ENCODE measurements at regions of chr3 and their contacts with region 1.

Region 1: GRCh38 chr3:50260027-50260941 is 8.7 kb upstream of the SEMA3B start:
- DNase-seq: peak; percentile 91
- ATAC-seq: peak; percentile 67
- H3K4me3 ChIP-seq: peak overlapping the region; percentile 50 to 76 (median 62); a peak in 5 of 6 replicates
- H3K27ac ChIP-seq: peak overlapping the region; percentile 99
- H3K4me1 ChIP-seq: peaks cover 60% of the 10 kb centered on the region
- H3K27me3 ChIP-seq: no peaks in the 10 kb centered on the region
- CTCF ChIP-seq: peak; percentile 92
- EP300 ChIP-seq: peak; percentile 85 to 92; a peak in 3 of 4 replicates
- POLR2A ChIP-seq: peak in 1 of 2 experiments; percentile 54; a peak in 1 of 4 replicates
- RAD21 ChIP-seq: peak; percentile 100

Region 2: DNA sequence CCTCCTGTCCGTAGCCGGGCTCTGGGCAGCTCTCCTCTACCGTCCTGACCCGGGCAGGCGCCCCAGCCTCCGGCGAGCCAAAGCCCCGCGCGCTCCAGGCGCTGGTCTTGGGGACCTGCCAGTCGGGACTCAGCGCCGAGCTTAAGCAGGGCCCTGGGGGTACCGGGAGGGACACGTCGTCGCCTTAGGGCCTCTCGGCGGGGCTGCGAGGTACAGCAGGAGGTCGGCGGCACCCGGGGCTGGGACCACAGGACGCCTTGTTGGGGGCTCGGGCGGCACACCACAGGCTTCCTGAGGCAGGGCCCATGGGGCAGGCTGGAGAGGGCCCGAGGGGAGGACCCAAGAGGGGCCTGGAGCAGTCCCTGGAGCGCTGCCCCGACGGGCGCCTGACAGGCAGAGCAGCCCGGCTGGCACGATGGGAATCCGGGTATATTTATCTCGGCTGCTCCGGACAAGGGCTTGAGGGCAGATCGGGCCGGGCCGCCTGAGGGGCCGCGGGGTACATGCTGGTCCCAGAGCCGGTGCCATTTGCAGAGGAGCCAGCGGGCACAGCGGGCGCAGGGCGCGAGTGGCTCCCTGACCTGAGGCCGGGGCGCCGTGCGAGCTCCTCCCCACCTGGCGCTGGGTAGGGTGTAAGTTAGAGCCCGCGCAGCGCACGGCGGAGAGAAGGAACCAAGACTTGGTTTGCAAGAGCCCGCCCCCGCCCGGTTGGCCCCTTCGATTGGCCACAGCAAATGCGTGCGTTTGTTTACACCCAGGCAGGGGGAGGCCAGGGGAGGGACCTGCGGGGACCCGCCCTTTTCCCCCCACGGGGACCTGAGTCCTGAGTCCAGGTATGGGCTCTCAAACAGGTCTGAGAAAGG is 54.6 kb before region 1 on chr3:
- CTCF ChIA-PET with region 1: no interaction called
- POLR2A ChIA-PET with region 1: interaction called, 82 read pairs
- in situ Hi-C with region 1: no loop called
- intact Hi-C with region 1: no loop called
- DNase-seq: peak; percentile 73
- ATAC-seq: peak; percentile 20
- H3K4me3 ChIP-seq: peak overlapping the region; percentile 79 to 93 (median 85)
- H3K27ac ChIP-seq: peak overlapping the region; percentile 99
- H3K4me1 ChIP-seq: peaks cover 87% of the 10 kb centered on the region
- H3K27me3 ChIP-seq: no peaks in the 10 kb centered on the region
- CTCF ChIP-seq: 0 out of 2 replicates have a peak, but pooled peaks have one; percentile 3
- EP300 ChIP-seq: 0 out of 4 replicates have a peak, but pooled peaks of 1 of the 2 experiments have one; percentile 24
- POLR2A ChIP-seq: peak in 1 of 2 experiments; percentile 62; a peak in 2 of 4 replicates
- RAD21 ChIP-seq: 0 out of 2 replicates have a peak, but pooled peaks have one; percentile 43

Region 3: DNA sequence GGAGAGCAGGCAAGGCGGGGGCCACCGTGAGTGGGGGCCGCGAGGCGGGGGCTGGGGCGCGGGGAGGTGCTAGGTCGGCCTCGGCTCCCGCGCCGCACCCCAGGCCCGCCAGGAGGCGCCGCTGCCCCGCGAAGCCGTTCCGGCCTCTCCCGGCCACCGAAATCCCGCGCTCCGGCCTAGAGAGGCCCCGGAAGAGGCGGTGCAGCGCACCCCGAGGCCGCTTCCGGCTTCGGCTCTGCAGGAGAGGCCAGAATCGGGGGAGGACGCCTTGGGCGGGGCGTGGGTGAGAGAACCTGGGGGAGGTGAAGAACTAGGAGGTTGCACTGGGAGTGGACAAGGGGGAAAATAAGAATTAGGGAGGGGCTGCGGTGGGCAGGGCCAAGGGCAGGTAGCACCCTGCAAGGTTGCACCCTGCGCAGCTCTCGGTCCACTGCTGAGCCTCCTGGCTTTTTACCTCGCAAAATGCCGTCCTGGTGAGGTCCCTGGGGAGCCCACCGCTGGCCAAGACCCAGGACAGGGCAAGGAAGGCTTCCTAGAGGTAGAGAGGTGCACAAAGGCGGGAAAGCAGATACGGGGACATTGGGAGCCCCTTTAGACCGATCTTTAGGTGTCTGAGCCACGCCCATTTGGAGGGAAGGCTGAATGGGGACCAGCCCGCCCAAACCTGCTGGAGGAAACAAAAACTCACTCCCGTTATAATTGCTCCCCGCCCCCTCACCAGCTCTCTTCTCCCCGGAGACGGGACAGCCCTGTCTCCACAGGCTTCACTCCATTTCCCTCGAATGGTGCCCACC is 32.7 kb before region 1 on chr3:
- CTCF ChIA-PET with region 1: interaction called, 26 read pairs
- POLR2A ChIA-PET with region 1: interaction called, 11 read pairs
- in situ Hi-C with region 1: no loop called
- intact Hi-C with region 1: no loop called
- DNase-seq: peak; percentile 82
- ATAC-seq: peak; percentile 78
- H3K4me3 ChIP-seq: peak overlapping the region; percentile 75 to 88 (median 84)
- H3K27ac ChIP-seq: peak overlapping the region; percentile 70
- H3K4me1 ChIP-seq: peaks cover 73% of the 10 kb centered on the region
- H3K27me3 ChIP-seq: no peaks in the 10 kb centered on the region
- CTCF ChIP-seq: peak; percentile 89
- EP300 ChIP-seq: peak; percentile 20 to 47; a peak in 2 of 4 replicates
- POLR2A ChIP-seq: no peak
- RAD21 ChIP-seq: peak; percentile 99

Region 4: GRCh38 chr3:50272911-50273693 is 12.8 kb after region 1 on chr3:
- CTCF ChIA-PET with region 1: interaction called, 81 read pairs
- POLR2A ChIA-PET with region 1: interaction called, 155 read pairs
- in situ Hi-C with region 1: no loop called
- intact Hi-C with region 1: loop called (anchors 1 kb)
- DNase-seq: peak; percentile 64
- ATAC-seq: peak; percentile 13
- H3K4me3 ChIP-seq: no peak overlapping the region
- H3K27ac ChIP-seq: peak overlapping the region; percentile 88
- H3K4me1 ChIP-seq: peaks cover 54% of the 10 kb centered on the region
- H3K27me3 ChIP-seq: no peaks in the 10 kb centered on the region; a peak in 1 of 5 replicates
- CTCF ChIP-seq: peak; percentile 99
- EP300 ChIP-seq: 0 out of 4 replicates have a peak, but pooled peaks of 1 of the 2 experiments have one; percentile 26
- POLR2A ChIP-seq: no peak
- RAD21 ChIP-seq: peak; percentile 99

Region 5: DNA sequence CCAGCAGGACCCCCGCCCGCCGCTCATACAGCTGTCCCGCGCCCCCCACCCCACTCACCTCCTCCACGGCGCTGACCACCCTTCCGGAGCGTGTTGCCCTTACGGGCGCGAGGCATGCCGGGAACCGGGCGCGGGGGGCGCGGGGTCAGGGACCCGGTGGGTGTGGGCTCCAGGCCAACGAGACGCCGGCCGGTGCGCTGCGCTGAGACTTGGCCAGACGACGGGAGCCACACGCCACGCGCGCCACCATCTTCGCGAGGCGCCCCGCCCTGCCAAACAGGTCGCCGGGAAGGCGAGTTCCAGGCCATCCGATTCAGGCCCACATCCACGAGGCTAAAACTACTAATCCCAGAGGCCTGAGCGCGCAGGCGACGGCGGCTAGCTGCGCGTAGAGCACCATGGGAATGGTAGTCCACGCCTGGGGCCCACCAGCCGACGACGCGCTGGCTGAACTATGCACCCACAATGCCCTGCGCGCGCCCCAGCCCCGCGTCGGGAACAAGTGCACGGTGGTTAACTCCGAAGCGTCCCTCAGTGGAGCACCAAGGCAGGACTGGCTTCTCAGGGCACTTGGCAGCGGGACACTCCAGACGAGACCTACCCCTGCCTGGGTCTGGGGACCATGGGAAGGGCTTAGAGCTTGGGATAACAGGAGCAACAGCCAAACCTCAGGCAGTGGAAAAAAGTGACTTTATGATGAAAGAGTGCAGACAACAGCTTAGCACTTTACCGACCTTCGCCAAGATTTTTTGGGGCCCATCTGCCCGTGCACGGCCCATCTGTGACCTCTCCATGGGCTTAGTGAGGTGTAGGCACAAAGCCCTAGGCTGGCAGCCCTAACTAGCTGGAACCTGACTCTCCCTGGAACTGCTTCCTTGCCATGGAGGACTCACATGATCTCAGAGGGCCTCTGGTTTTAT is 32.1 kb after region 1 on chr3 and contains the start of gene IFRD2:
- CTCF ChIA-PET with region 1: no interaction called
- POLR2A ChIA-PET with region 1: interaction called, 25 read pairs
- in situ Hi-C with region 1: no loop called
- intact Hi-C with region 1: no loop called
- DNase-seq: peak; percentile 95
- ATAC-seq: peak; percentile 91
- H3K4me3 ChIP-seq: peak within 1 kb of the TSS; percentile 60 to 92 (median 85)
- H3K27ac ChIP-seq: peak within 1 kb of the TSS; percentile 73
- H3K4me1 ChIP-seq: peaks cover 33% of the 10 kb centered on the region
- H3K27me3 ChIP-seq: no peaks in the 10 kb centered on the region
- CTCF ChIP-seq: peak; percentile 53
- EP300 ChIP-seq: peak in 1 of 2 experiments; percentile 44; a peak in 2 of 4 replicates
- POLR2A ChIP-seq: peak in 1 of 2 experiments; percentile 73; a peak in 2 of 4 replicates
- RAD21 ChIP-seq: peak; percentile 31; the same call in 1 of the 2 replicates
- total RNA-seq, gene IFRD2: 81.4 and 96.1 TPM in 2 replicates

Region 6: DNA sequence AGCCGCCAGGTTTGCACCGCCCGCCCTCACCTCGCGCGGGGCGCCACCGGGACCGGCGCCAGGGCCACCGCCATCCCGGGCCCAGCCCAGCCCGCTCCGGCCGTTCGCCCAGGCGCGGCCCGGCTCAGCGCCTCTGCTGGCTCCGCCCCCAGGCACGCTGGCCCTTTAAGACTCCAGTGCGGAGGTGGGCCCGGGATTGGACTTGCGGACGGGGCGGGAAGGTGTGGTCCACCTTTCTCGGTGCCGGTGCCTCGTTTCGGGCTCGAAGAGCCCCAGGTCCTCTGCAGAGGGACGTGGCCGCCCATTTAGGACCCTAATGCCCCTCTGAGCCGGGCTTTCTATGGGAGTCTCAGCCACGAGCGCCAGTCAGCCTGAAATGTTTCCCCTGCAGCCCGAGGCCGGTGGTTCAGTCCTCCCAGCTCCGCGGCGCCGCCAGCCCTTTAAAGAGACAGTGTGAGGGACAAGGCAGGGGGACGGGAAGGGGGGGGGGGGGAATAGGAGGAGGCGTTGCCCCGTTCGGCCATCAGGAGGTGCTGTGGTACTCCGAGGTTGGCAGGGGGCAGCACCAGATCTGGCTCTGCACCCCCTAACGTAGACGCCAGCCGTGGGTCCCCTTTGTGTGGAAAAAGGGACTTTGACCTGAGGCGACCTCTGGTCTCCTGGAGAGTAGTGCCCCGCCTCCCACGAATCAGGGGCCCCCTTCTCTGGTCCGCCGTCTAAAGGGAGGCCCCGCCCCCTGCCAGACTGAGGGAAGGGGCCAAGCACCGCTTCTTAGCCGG is 61.2 kb after region 1 on chr3:
- CTCF ChIA-PET with region 1: interaction called, 4 read pairs
- POLR2A ChIA-PET with region 1: interaction called, 16 read pairs
- in situ Hi-C with region 1: loop called (anchors 5 kb)
- intact Hi-C with region 1: no loop called
- DNase-seq: peak; percentile 90
- ATAC-seq: peak; percentile 73
- H3K4me3 ChIP-seq: peak overlapping the region; percentile 81 to 91 (median 85); a peak in 5 of 6 replicates
- H3K27ac ChIP-seq: peak overlapping the region; percentile 100
- H3K4me1 ChIP-seq: peaks cover 79% of the 10 kb centered on the region
- H3K27me3 ChIP-seq: no peaks in the 10 kb centered on the region; a peak in 1 of 5 replicates
- CTCF ChIP-seq: peak; percentile 81
- EP300 ChIP-seq: peak in 1 of 2 experiments; percentile 64; a peak in 1 of 4 replicates
- POLR2A ChIP-seq: no peak; a peak in 1 of 4 replicates
- RAD21 ChIP-seq: peak; percentile 63

Region 7: GRCh38 chr3:50337191-50337841 is 77.0 kb after region 1 on chr3:
- CTCF ChIA-PET with region 1: no interaction called
- POLR2A ChIA-PET with region 1: interaction called, 12 read pairs
- in situ Hi-C with region 1: no loop called
- intact Hi-C with region 1: no loop called
- DNase-seq: peak; percentile 98
- ATAC-seq: peak; percentile 89
- H3K4me3 ChIP-seq: peak overlapping the region; percentile 86 to 89 (median 88); a peak in 5 of 6 replicates
- H3K27ac ChIP-seq: peak overlapping the region; percentile 85
- H3K4me1 ChIP-seq: peaks cover 58% of the 10 kb centered on the region
- H3K27me3 ChIP-seq: peaks cover 1 to 2% of the 10 kb centered on the region in 2 experiments; a peak in 1 of 5 replicates
- CTCF ChIP-seq: peak; percentile 2; the same call in 1 of the 2 replicates
- EP300 ChIP-seq: no peak
- POLR2A ChIP-seq: peak in 1 of 2 experiments; percentile 61; a peak in 2 of 4 replicates
- RAD21 ChIP-seq: no peak; the same call in 1 of the 2 replicates